Mammary epithelial cell (primary cell): ENCODE measurements at regions of chr2 and their contacts with region 1.

Region 1: GRCh38 chr2:161586517-161587167 is 37.6 kb upstream of the SLC4A10 start:
- DNase-seq: no peak
- H3K4me3 ChIP-seq: no peak overlapping the region
- H3K27ac ChIP-seq: no peak overlapping the region
- H3K4me1 ChIP-seq: no peaks in the 10 kb centered on the region
- H3K27me3 ChIP-seq: no peaks in the 10 kb centered on the region
- CTCF ChIP-seq: peak; percentile 68 to 73

Region 2: DNA sequence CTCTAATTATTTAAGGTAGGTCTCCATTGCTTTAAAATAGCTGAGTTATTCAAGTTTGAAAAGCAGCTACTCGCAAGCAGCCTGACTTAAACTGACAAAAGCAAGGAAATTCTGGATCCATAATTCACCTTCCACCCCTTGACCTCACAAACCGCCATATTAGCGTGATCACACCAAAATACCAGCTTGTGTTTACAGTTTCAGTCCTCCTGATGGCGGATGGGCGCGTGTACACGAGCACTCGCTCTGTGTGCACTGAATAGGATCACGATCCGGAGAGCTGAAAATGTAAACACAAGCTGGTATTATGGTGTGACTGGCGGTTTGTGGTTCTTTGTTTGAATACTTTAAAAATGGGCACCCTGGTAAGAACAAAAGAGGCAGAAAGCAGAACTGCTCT is 320.8 kb before region 1 on chr2:
- CTCF ChIA-PET with region 1: no interaction called
- dilution Hi-C with region 1: no loop called
- in situ Hi-C with region 1: no loop called
- intact Hi-C with region 1: no loop called
- DNase-seq: no peak
- H3K4me3 ChIP-seq: no peak overlapping the region
- H3K27ac ChIP-seq: no peak overlapping the region
- H3K4me1 ChIP-seq: no peaks in the 10 kb centered on the region
- H3K27me3 ChIP-seq: no peaks in the 10 kb centered on the region
- CTCF ChIP-seq: no peak

Region 3: GRCh38 chr2:161436411-161436810 is 150.2 kb before region 1 on chr2:
- CTCF ChIA-PET with region 1: no interaction called
- dilution Hi-C with region 1: no loop called
- in situ Hi-C with region 1: no loop called
- intact Hi-C with region 1: no loop called
- DNase-seq: peak; percentile 67
- H3K4me3 ChIP-seq: no peak overlapping the region
- H3K27ac ChIP-seq: no peak overlapping the region
- H3K4me1 ChIP-seq: no peaks in the 10 kb centered on the region
- H3K27me3 ChIP-seq: peaks cover 8% of the 10 kb centered on the region
- CTCF ChIP-seq: no peak

Region 4: DNA sequence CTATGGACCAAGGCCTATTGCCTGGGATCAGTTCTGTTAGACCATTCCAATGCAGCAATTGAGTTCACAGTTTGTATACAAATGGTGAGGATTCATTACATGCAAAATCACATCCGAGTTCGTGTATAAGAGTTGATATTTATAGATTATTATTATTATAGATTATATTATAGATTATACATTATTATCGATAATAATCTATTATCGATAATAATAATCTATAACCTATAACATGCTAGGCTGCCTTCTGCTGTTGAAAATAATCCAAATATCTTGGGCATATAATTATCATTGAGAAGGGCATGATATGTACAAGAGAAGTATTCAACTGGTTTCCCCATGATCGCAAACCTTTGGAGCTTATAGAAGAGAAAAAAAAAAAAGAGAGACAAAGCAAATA is 351.7 kb after region 1 on chr2:
- CTCF ChIA-PET with region 1: no interaction called
- dilution Hi-C with region 1: no loop called
- in situ Hi-C with region 1: loop called in 1 of 2 experiments (anchors 10 kb)
- intact Hi-C with region 1: no loop called
- DNase-seq: no peak
- H3K4me3 ChIP-seq: no peak overlapping the region
- H3K27ac ChIP-seq: no peak overlapping the region
- H3K4me1 ChIP-seq: no peaks in the 10 kb centered on the region
- H3K27me3 ChIP-seq: peaks cover 5% of the 10 kb centered on the region
- CTCF ChIP-seq: no peak

Region 5: GRCh38 chr2:161946489-161947107 is 360.0 kb after region 1 on chr2:
- CTCF ChIA-PET with region 1: interaction called, 6 read pairs
- dilution Hi-C with region 1: no loop called
- in situ Hi-C with region 1: loop called in 1 of 2 experiments (anchors 5 kb)
- intact Hi-C with region 1: loop called (anchors 1 kb)
- DNase-seq: peak; percentile 7
- H3K4me3 ChIP-seq: no peak overlapping the region
- H3K27ac ChIP-seq: no peak overlapping the region
- H3K4me1 ChIP-seq: no peaks in the 10 kb centered on the region
- H3K27me3 ChIP-seq: peaks cover 4% of the 10 kb centered on the region
- CTCF ChIP-seq: peak; percentile 50 to 54

Region 6: GRCh38 chr2:162138310-162138709 is 551.7 kb after region 1 on chr2:
- CTCF ChIA-PET with region 1: no interaction called
- dilution Hi-C with region 1: no loop called
- in situ Hi-C with region 1: loop called in 1 of 2 experiments (anchors 10 kb)
- intact Hi-C with region 1: no loop called
- DNase-seq: no peak
- H3K4me3 ChIP-seq: no peak overlapping the region
- H3K27ac ChIP-seq: no peak overlapping the region
- H3K4me1 ChIP-seq: no peaks in the 10 kb centered on the region
- H3K27me3 ChIP-seq: no peaks in the 10 kb centered on the region
- CTCF ChIP-seq: no peak